ENCODE measurements at regions of chr2 and their contacts with region 1.

Region 1: DNA sequence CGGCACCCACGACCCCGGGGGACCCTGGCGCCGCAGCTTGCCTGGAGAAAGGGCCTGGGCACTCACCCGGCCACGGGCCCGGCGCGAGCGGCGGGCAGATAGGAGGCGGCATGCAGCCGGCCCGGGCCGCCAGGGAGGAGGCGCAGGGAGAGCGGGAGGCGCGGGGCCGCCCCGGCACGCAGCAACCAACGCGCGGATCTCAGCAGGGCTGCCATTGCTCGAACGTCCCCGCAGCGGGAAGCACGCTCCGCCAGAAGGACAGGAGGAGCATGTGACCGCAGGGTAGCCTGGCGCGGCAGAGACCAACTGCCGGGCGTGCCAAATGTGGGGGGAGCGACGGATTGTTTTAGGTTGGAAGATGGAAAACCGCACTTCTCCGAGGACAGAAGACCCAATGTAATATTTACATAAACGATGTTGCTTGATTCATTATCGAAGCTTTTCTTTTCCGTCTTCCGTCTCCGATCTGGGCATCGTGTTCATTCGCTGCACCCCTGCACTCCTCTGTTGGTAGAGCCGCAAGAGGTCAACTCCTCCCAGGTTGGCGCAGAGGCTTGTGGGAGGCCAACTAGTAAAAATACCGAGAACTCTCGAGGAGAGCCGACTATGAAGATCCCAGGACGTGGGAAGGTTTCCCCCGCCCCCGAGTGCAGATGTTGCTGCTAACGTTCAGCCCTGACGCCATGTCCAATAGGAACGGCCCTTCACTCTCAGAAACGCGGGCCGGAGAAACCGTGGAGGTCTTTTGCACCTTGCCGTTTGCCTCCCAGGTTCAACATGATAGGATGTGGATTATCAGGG is at the start of gene LRPPRC:
- DNase-seq: peak; percentile 93 to 96 (median 94)
- ATAC-seq: peak; percentile 98 to 99 (median 98)
- H3K4me3 ChIP-seq: peak within 1 kb of the TSS; percentile 65 to 100 (median 97)
- H3K27ac ChIP-seq: peak within 1 kb of the TSS; percentile 55 to 89 (median 80)
- H3K4me1 ChIP-seq: peaks cover 8 to 32% (median 21%) of the 10 kb centered on the region in 12 donors
- H3K27me3 ChIP-seq: no peaks in the 10 kb centered on the region
- CTCF ChIP-seq: no peak
- POLR2A ChIP-seq: peak; percentile 35 to 86
- total RNA-seq, gene LRPPRC: 58.5 to 117 (median 90.8) TPM

Region 2: GRCh38 chr2:44167940-44168680 is 172.2 kb after region 1 on chr2:
- intact Hi-C with region 1: loop called in 2 of 10 experiments (anchors 5 to 10 kb)
- DNase-seq: peak; percentile 96 to 100 (median 99)
- ATAC-seq: peak; percentile 93 to 95 (median 94)
- H3K4me3 ChIP-seq: peak overlapping the region; percentile 18 to 87 (median 58)
- H3K27ac ChIP-seq: peak overlapping the region; percentile 90 to 98 (median 94)
- H3K4me1 ChIP-seq: peaks cover 0 to 34% (median 20%) of the 10 kb centered on the region in 12 donors
- H3K27me3 ChIP-seq: no peaks in the 10 kb centered on the region
- CTCF ChIP-seq: no peak
- POLR2A ChIP-seq: peak in 1 of 2 donors; percentile 47

Measured in heart left ventricle (tissue), 16 donors.